CD4-positive, alpha-beta memory T cell (primary cell): ENCODE measurements at regions of chr13 and their contacts with region 1.

Region 1: DNA sequence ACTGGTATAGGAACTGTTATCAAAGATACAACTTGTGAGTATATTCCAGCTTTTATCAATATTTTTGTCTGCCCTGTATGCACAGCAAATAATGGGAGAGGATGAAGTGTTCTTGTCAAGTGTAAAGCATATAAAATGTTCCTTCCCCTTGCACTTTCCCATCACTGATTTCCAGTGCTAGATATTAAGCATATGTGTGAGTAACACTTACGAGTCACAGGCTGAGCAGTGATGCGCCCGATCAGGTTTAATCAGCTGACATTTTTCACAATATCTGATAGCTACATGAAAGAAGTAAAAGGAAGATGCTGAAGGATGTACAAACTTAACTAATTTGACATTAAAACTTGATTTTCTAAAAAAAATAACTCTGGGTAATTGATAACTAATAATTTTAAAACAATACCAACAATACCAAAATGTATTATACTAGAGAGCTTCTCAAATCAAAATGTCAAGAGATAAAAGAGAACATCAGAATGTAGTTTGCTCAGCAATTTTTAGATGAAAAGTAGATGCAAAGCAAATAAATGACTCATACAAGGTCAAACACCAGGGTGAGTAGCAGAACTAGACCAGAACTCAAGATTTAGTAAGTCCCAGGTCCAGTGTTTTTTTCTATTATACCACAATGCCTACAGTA is 56.4 kb downstream of the ZDHHC20 start:
- DNase-seq: no peak
- H3K4me3 ChIP-seq: no peak overlapping the region
- H3K4me3 Mint-ChIP-seq: no peak overlapping the region
- H3K27ac ChIP-seq: no peak overlapping the region
- H3K27ac Mint-ChIP-seq: peak overlapping the region in 3 of 7 donors; percentile 2 to 67 (median 59)
- H3K4me1 ChIP-seq: peaks cover 16% of the 10 kb centered on the region
- H3K4me1 Mint-ChIP-seq: peaks cover 21 to 43% (median 27%) of the 10 kb centered on the region in 4 donors
- H3K27me3 ChIP-seq: no peaks in the 10 kb centered on the region
- H3K27me3 Mint-ChIP-seq: no peaks in the 10 kb centered on the region

Region 2: DNA sequence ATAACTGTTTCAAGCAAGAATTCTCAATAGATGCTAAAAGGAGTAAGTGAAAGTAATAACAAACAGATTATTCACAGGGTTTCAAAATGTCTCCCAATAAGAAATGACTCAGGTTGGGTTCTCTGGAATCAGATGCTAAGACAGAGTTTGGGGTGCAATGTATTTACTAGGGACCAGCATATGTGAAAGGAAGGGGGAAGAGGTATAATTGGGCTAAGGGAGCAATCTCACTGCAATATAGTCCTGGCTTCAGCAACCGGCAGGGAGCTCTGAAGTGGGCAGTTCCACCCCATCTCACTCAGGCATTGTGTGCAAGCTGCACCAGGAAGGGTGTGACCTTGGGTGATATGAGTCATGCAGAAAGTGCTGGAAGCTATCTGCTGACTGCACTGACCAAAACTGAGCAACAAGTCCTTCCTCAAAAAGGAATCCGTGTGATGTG is 33.0 kb after region 1 on chr13:
- CTCF ChIA-PET with region 1: no interaction called
- POLR2A ChIA-PET with region 1: no interaction called
- intact Hi-C with region 1: loop called (anchors 5 kb)
- DNase-seq: peak; percentile 3 to 59 (median 17)
- H3K4me3 ChIP-seq: no peak overlapping the region
- H3K4me3 Mint-ChIP-seq: peak overlapping the region; percentile 1 to 75 (median 45)
- H3K27ac ChIP-seq: no peak overlapping the region
- H3K27ac Mint-ChIP-seq: peak overlapping the region in 4 of 7 donors; percentile 8 to 84 (median 12)
- H3K4me1 ChIP-seq: peaks cover 23% of the 10 kb centered on the region
- H3K4me1 Mint-ChIP-seq: peaks cover 35 to 56% (median 45%) of the 10 kb centered on the region in 4 donors
- H3K27me3 ChIP-seq: no peaks in the 10 kb centered on the region
- H3K27me3 Mint-ChIP-seq: no peaks in the 10 kb centered on the region